ENCODE measurements at regions of chr15 and their contacts with region 1.

Region 1: DNA sequence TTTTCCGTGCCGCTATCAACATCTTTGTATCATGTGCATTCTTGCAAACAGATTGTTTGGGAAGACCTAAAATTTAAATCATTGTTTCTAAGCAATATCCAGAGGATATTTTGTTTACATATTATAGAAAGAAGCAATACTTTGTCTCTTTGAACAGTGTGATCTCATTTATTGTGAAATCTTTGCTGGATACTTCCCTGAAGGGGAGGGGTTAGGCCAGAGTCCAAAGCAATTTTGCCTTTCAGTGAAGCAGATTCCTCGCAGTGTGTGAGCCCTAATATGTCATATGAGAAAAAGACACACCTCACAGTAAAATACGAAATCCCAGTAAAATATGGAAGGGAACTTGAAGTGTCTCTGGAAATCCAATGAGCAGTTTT is 158.7 kb upstream of the SLCO3A1 start:
- DNase-seq: peak in 1 of 3 donors; percentile 10
- H3K4me3 ChIP-seq: no peak overlapping the region
- H3K27ac ChIP-seq: no peak overlapping the region
- H3K4me1 ChIP-seq: no peaks in the 10 kb centered on the region
- H3K27me3 ChIP-seq: no peaks in the 10 kb centered on the region

Region 2: DNA sequence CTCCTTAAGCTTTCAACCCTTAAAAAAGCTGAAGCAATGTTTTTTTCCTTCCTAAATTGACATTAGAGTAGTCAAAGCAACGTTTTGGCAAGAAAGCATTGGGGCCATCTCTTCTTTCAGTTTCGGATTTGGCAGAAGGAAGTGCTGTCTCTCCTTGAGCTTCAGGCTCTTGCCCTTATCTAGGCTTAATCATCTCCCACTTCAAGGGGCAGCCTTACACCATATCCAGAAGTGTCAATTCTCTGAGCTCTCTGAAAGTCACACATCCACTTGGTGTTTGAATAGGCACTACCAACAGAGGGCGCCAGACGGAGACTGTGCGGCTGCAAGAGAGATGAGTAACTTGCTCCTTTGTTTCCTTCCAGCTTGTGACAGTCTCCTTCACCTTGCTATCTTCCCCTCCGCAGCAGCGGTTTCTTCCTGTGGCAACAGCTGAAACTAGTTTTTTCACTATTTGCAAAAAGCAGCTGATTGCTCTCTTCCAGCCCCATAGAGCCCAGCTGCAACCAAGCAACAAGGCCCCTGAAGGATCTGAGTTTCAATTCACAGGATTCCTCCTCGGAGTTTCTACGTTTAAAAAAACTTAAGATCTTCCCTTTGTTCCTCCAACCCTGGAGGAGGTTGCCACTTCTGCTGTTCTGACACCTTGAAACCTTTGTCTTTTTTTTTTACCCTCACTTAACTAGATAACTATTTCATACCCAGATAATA is 11.7 kb after region 1 on chr15:
- CTCF ChIA-PET with region 1: interaction called, 21 read pairs
- POLR2A ChIA-PET with region 1: no interaction called
- DNase-seq: peak; percentile 90 to 96 (median 95)
- H3K4me3 ChIP-seq: peak overlapping the region in 2 of 7 experiments; percentile 30 to 48
- H3K27ac ChIP-seq: peak overlapping the region in 1 of 2 experiments; percentile 25
- H3K4me1 ChIP-seq: peaks cover 3 to 11% (median 9%) of the 10 kb centered on the region in 4 experiments
- H3K27me3 ChIP-seq: no peaks in the 10 kb centered on the region